BJ (cell line): ENCODE measurements at regions of chrX and their contacts with region 1.

Region 1: DNA sequence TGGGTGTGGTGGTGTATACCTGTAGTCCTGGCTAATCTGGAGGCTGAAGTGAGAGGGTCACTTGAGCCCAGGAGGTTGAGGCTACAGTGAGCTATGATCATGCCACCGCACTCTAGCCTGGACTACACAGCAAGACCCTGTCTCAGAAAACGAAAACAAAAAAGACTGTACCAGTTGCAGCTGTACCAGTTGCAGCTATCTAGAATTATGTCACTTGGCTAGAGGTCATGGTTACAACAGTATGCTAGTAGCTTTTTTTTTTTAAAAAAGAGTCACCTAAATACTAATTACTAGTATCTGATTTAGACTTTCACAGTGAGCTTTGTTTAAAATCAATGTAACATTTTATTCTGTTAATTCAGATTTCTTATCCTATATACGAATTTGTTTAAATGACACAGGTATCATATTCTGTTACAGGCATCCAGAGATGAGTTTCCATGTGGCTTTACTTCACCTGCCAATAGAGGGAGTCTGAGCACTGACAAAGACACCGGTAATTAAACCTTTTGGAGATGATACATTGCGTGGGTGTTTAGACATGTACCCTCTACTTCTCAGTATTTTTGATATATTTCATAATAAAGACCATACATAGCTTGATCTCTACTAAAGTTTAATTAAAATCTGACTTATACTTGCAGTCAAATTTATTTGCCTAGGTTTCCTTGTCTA is 100.2 kb upstream of the IL13RA1 start:
- DNase-seq: no peak
- H3K4me3 ChIP-seq: no peak overlapping the region
- H3K27me3 ChIP-seq: no peaks in the 10 kb centered on the region
- CTCF ChIP-seq: peak; percentile 37; the same call in 1 of the 2 replicates

Region 2: DNA sequence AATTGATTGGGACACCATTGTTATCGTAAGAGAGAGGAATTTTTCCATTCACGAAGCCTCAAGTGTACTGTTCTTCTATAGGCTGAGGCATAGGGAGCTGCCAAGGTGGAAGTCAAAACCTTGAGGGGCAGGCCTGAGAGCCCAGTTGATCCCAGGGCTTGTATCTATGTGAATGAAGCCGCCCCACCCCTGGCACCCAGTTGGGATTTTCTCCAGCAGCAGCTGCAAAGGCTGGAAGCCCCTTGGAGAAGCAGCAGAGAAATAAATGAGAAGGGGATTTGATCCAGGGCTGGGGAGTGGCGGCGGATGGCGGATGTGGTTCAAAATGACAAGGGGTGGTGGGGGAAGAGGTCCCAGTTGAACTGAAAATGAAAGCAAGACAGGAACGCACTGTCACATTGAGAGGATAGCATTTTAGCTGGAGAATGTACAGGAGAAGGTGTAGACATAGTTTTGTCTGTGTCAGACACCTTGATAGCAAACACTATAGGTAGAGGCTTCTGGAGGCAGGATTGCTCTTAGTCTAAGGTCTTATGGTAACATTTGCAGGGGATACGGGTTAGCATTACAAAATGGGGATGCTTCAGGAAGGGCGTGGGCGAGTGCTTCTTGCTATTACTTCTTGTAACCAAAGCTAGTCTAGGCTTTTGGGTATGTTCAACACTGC is 99.0 kb before region 1 on chrX:
- CTCF ChIA-PET with region 1: no interaction called
- POLR2A ChIA-PET with region 1: no interaction called
- DNase-seq: no peak
- H3K4me3 ChIP-seq: no peak overlapping the region
- H3K27me3 ChIP-seq: no peaks in the 10 kb centered on the region
- CTCF ChIP-seq: no peak

Region 3: GRCh38 chrX:118612294-118612693 is 14.9 kb before region 1 on chrX:
- CTCF ChIA-PET with region 1: no interaction called
- POLR2A ChIA-PET with region 1: no interaction called
- DNase-seq: no peak
- H3K4me3 ChIP-seq: no peak overlapping the region
- H3K27me3 ChIP-seq: no peaks in the 10 kb centered on the region
- CTCF ChIP-seq: no peak

Region 4: GRCh38 chrX:118637997-118638396 is 10.8 kb after region 1 on chrX:
- CTCF ChIA-PET with region 1: interaction called, 10 read pairs
- POLR2A ChIA-PET with region 1: no interaction called
- DNase-seq: no peak
- H3K4me3 ChIP-seq: no peak overlapping the region
- H3K27me3 ChIP-seq: no peaks in the 10 kb centered on the region
- CTCF ChIP-seq: peak; percentile 25; the same call in 1 of the 2 replicates